HCT116 (cell line): ENCODE measurements at regions of chr6 and their contacts with region 1.

Region 1: GRCh38 chr6:31729515-31729978 is 448 bp upstream of the DDAH2 start:
- DNase-seq: peak; percentile 70
- ATAC-seq: peak; percentile 82
- H3K4me3 ChIP-seq: peak overlapping the region; percentile 70 to 72
- H3K27ac ChIP-seq: peak overlapping the region; percentile 90
- H3K4me1 ChIP-seq: peaks cover 12 to 35% of the 10 kb centered on the region in 2 experiments
- H3K27me3 ChIP-seq: no peaks in the 10 kb centered on the region
- CTCF ChIP-seq: peak in 2 of 3 experiments; percentile 50 to 64; a peak in 1 of 6 replicates
- POLR2A ChIP-seq: no peak
- RAD21 ChIP-seq: no peak

Region 2: DNA sequence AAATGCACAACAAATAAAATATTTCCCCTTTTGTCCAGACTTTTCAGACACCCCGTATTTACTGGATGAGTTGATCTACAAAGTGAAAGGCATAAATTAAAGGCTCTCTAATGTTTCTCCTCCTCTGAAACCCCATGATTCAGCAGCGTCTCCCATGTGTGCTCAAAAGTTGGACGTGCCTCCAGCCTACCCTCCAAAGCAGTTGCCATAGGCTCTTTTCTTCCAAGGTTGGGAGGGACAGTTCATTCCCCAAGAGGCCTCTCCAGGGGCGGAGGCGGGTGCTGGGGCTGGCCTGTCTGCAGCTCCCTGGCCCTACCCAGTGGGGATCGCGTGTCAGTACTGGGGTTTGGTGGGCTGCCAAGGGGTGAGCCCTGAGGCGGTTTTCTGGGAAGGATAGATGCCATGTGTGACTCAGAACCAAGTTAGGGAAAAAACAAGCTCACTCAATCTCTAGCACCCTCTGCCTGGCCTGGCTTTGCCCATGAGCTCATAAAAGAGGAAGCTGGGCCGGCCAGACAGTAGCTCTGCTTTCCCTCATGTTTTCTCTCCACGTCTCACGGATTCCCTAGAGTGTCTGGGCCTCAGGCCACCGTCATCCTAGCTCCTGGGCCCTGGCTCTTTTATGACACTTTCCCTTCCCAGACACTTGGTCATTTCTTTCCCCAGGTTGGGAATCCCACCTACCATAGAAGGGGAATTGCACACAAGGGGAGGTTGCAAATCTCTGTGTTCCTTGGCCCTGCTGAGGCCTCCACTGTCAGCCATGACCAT is 977.2 kb before region 1 on chr6:
- CTCF ChIA-PET with region 1: no interaction called
- POLR2A ChIA-PET with region 1: no interaction called
- RAD21 ChIA-PET with region 1: no interaction called
- intact Hi-C with region 1: no loop called
- DNase-seq: peak; percentile 99
- ATAC-seq: peak; percentile 82
- H3K4me3 ChIP-seq: no peak overlapping the region
- H3K27ac ChIP-seq: peak overlapping the region; percentile 96
- H3K4me1 ChIP-seq: peaks cover 76 to 97% of the 10 kb centered on the region in 2 experiments
- H3K27me3 ChIP-seq: no peaks in the 10 kb centered on the region
- CTCF ChIP-seq: no peak
- POLR2A ChIP-seq: no peak
- RAD21 ChIP-seq: no peak

Region 3: DNA sequence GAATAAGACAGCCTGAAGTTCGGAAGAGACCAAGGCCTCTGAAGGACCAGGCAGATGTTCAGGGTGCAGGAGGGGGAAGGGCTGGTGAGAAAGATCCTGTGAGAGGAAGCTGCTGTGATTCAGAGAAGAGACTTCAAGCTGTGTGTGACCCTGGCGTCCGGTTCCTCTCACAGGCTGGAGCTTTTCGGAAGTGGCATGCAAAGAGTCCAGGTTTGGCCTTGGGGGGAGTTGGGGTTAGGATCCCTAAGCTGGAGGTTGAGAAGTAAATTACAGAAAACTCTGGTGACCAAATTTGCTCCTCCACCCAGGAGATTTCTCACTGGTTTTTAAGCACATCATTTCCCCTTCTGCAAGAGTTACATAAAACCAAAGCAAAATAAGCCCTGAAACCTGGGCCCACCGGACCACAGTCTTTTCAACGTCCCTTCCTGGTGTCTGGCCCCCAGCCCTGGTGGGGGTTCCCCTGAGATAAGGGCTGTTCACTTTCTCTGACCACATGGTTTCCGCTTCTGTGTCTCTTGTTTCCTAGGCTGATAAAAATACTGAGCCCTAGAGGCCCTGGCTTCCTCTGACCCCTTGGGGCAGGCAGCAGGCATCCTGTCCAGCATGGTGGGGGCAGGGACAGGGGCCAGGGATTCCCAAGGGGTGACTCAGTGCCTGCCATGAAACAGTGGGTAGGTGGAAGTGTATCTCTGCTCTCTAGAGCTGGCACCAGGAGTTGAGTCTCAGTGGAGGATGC is 169.4 kb before region 1 on chr6:
- CTCF ChIA-PET with region 1: no interaction called
- POLR2A ChIA-PET with region 1: no interaction called
- RAD21 ChIA-PET with region 1: no interaction called
- intact Hi-C with region 1: no loop called
- DNase-seq: no peak
- ATAC-seq: peak; percentile 72
- H3K4me3 ChIP-seq: peak overlapping the region in 1 of 2 experiments; percentile 24; a peak in 1 of 4 replicates
- H3K27ac ChIP-seq: no peak overlapping the region
- H3K4me1 ChIP-seq: peaks cover 5 to 24% of the 10 kb centered on the region in 2 experiments; a peak in 3 of 4 replicates
- H3K27me3 ChIP-seq: no peaks in the 10 kb centered on the region
- CTCF ChIP-seq: no peak
- POLR2A ChIP-seq: no peak
- RAD21 ChIP-seq: no peak

Region 4: DNA sequence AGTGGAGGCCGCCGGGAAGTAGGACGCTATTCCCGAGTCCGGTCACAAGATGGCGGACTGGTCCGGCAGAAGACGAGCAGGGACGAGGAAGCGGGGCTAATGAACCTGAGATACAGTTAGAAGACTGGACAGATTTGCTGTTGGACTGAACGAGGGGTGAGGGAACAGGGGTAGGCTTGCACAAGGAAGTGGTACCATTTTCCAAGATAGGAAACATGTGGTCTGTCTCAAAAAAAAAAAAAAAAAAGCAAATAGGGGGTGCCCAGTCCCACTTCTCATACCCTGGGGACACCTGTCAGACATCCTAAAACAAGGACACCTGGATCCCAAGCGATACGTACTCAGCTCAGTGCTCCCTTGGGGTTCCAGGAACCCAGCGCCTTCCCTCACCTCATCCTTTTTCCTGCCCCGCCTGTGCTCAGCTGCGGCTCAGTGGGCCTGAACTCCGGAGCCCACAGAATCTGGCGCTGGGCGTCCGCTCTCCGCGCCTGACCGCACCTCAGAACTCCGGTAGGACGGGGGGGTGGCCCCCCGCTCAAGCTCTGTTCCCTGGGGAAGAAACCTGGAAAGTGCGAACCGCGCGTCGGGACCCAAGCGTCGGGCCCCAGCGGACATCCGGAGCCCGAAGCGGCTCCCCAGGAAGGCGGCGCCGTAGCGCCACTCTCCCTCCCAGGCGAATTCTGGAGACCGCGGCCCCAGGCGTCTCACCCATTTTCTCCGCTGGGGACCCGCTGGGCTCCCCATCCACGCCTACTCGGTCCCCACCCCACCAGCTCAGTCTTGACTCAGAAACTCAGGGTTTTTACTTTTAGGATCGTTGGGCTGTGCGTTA is 48.5 kb before region 1 on chr6 and contains the start of gene LY6G5C:
- CTCF ChIA-PET with region 1: no interaction called
- POLR2A ChIA-PET with region 1: interaction called, 3 read pairs
- RAD21 ChIA-PET with region 1: no interaction called
- intact Hi-C with region 1: loop called (anchors 2 kb)
- DNase-seq: peak; percentile 73
- ATAC-seq: peak; percentile 85
- H3K4me3 ChIP-seq: peak within 1 kb of the TSS; percentile 53 to 61
- H3K27ac ChIP-seq: peak within 1 kb of the TSS; percentile 70
- H3K4me1 ChIP-seq: peaks cover 4 to 19% of the 10 kb centered on the region in 2 experiments; a peak in 3 of 4 replicates
- H3K27me3 ChIP-seq: no peaks in the 10 kb centered on the region
- CTCF ChIP-seq: peak; percentile 43 to 90 (median 65)
- POLR2A ChIP-seq: no peak
- RAD21 ChIP-seq: peak; percentile 99
- total RNA-seq, gene LY6G5C: 1.7 TPM

Region 5: DNA sequence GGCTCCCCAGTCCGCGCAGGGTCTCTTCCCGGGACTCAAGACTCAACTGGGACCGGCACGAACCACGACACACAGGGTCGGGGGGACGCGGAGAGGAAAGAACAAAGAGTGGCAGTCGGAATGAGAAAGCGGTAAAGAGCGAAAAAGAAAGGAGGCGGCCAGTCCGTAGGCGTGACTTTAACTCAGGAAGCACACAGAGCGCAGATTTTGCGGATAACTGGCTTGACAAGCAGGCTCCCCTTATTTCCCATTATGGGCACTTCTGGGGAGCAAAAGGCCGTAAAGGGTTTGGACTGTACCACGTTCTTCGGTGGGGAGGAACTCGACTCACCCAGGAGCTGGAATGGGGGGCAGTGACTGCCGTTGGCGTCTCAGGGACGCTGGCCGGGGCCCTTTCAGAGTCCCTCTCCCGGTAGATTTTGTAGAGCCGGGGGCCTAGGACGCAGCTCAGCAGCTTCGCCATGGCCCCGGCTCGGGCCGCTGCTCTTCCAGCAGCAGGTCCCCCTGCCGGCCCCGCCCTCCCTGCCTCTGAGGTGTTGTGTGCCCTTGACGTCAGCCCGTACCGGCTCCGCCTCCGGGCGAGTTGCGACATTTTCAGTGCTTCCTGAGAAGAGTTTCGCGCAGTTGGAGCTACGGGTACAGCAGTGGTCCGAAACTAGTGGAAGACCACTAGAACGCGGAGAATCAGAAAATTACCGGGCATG is 26.6 kb before region 1 on chr6 and contains the start of gene ABHD16A:
- CTCF ChIA-PET with region 1: no interaction called
- POLR2A ChIA-PET with region 1: interaction called, 12 read pairs
- RAD21 ChIA-PET with region 1: interaction called in 1 of 2 experiments, 3 read pairs
- intact Hi-C with region 1: no loop called
- DNase-seq: peak; percentile 98
- ATAC-seq: peak; percentile 93
- H3K4me3 ChIP-seq: peak within 1 kb of the TSS; percentile 89 to 98
- H3K27ac ChIP-seq: peak within 1 kb of the TSS; percentile 82
- H3K4me1 ChIP-seq: peaks cover 7 to 15% of the 10 kb centered on the region in 2 experiments; a peak in 3 of 4 replicates
- H3K27me3 ChIP-seq: no peaks in the 10 kb centered on the region
- CTCF ChIP-seq: 0 out of 6 replicates have a peak, but pooled peaks of 1 of the 3 experiments have one; percentile 4
- POLR2A ChIP-seq: peak; percentile 48
- RAD21 ChIP-seq: no peak; the same call in 1 of the 2 replicates
- total RNA-seq, gene ABHD16A: 32.4 TPM